Endothelial cell of umbilical vein (primary cell): ENCODE measurements at regions of chr16 and their contacts with region 1.

Region 1: DNA sequence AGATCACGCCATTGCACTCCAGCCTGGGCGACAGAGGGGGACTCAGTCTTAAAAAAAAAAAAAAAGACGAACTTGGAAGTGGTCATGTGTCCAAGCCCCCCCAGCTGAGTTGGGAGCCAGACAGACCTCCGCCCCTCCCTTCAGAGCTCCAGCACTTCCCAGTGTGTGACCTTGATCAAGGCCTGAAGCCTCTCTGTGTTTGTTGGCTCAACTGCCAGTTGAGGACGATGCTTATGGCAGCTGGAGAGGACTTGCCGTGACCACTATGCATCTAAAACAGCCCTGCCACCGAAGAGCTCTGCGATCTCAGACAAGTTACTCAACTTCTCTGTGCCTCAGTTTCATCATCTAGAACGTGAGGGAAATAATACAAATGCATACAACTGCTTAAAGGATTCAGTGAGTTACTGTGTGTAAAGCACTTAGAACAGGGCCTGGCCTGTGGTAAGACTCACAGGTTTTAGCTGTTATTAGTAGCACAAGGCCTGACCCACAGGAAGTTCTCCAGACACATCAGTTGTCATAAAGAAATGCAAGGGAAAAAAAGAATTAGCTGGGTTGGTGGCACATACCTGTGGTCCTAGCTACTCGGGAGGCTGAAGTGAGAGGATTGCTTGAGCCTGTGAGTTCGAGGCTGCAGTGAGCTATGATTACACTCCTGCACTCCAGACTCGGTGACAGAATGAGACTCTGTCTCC is 7.0 kb upstream of the IL27 start:
- DNase-seq: no peak
- H3K4me3 ChIP-seq: no peak overlapping the region
- H3K27ac ChIP-seq: no peak overlapping the region
- H3K4me1 ChIP-seq: no peaks in the 10 kb centered on the region
- H3K27me3 ChIP-seq: no peaks in the 10 kb centered on the region
- CTCF ChIP-seq: no peak
- POLR2A ChIP-seq: no peak

Region 2: DNA sequence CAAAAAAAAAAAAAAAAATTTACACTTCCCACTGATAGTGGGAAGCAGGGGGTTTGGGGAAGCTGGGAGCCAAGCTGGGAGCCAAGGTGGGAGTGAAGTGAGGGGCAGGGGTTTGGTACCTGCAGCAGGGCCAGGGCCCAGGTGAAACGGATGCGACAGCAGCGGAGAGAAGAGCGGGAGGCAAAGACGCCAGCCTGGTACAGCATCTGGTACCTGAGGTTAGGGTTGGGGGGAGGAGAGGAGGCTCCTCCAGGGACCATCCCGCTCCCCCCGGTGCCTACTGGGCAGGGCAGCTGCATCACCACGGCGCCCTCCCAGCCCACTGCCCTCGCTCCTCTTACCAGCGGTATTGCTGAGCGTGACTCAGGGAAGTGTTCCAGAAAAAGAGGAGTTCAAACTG is 31.6 kb before region 1 on chr16:
- CTCF ChIA-PET with region 1: no interaction called
- POLR2A ChIA-PET with region 1: interaction called, 11 read pairs
- dilution Hi-C with region 1: no loop called
- intact Hi-C with region 1: no loop called
- DNase-seq: no peak
- H3K4me3 ChIP-seq: no peak overlapping the region
- H3K27ac ChIP-seq: no peak overlapping the region
- H3K4me1 ChIP-seq: no peaks in the 10 kb centered on the region
- H3K27me3 ChIP-seq: no peaks in the 10 kb centered on the region
- CTCF ChIP-seq: no peak
- POLR2A ChIP-seq: no peak